Endothelial cell of umbilical vein (primary cell): ENCODE measurements at regions of chr22 and their contacts with region 1.

Region 1: DNA sequence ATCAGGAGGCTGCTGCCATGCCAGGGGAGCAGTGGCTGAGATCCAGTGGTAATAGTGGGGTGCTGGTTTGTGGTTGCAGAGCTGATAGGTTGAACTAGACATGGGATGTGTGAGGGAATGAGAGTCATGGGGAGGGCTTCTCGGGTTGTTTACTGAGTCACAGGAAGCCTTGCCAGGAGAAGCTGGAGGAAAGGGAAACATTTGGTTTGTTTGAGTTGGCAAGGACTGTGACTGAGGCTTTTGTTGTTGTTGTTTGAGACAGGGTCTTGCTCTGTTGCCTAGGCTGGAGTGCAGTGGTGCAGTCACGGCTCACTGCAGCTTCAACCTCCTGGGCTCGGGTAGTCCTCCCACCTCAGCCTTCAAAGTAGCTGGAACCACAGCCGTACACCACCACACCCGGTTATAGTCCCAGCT is 49.3 kb downstream of the CABIN1 start:
- DNase-seq: peak; percentile 97
- H3K4me3 ChIP-seq: no peak overlapping the region
- H3K27ac ChIP-seq: peak overlapping the region; percentile 90
- H3K4me1 ChIP-seq: peaks cover 32% of the 10 kb centered on the region
- H3K27me3 ChIP-seq: no peaks in the 10 kb centered on the region
- CTCF ChIP-seq: no peak
- POLR2A ChIP-seq: peak; percentile 24

Region 2: GRCh38 chr22:24011735-24012068 is 48.7 kb before region 1 on chr22:
- CTCF ChIA-PET with region 1: interaction called, 3 read pairs
- POLR2A ChIA-PET with region 1: no interaction called
- dilution Hi-C with region 1: no loop called
- intact Hi-C with region 1: loop called (anchors 1 kb)
- DNase-seq: no peak
- H3K4me3 ChIP-seq: peak overlapping the region; percentile 78 to 93 (median 88)
- H3K27ac ChIP-seq: peak overlapping the region; percentile 46
- H3K4me1 ChIP-seq: peaks cover 5% of the 10 kb centered on the region
- H3K27me3 ChIP-seq: no peaks in the 10 kb centered on the region
- CTCF ChIP-seq: no peak
- POLR2A ChIP-seq: no peak